ENCODE measurements at regions of chr4 and their contacts with region 1.

Region 1: GRCh38 chr4:158193171-158193749 is 17.0 kb upstream of the TMEM144 start:
- DNase-seq: no peak
- ATAC-seq: peak; percentile 73

Region 2: DNA sequence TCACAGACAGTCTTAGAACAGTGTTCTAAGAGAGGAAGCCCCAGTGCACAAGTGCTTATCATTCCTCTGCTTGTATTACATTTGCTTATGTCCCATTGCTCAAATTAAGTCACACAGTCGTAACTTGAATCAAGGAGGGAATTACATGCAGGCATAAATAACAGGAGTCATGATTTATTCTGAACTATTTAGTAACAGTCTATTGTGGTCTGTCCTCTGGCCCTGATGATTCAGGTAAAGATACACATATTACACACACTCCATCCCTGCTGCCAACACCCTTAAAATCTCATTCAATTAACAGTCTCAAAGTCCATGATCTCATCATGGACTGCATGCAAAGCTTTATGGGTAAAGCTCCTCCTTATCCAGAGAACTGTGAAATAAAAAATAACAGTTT is 912.6 kb before region 1 on chr4:
- intact Hi-C with region 1: no loop called
- DNase-seq: no peak
- ATAC-seq: no peak

Region 3: DNA sequence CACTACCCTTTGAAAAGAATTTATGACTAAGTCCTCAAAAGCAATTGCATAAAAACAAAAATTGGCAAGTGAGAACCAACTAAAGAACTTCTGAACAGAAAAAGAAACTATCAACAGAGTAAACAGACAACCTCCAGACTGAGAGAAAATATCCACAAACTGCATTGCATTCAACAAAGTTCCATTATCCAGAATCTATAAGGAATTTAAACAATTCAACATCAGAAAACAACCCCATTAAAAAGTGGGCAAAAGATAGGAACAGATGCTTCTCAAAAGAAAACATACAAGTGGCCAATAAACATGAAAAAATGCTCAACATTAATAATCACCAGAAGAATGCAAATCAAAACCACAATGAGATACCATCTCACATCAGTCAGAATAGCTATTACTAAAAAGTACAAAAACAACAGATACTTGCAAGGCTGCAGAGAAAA is 150.6 kb before region 1 on chr4:
- intact Hi-C with region 1: no loop called
- DNase-seq: no peak
- ATAC-seq: no peak

Region 4: DNA sequence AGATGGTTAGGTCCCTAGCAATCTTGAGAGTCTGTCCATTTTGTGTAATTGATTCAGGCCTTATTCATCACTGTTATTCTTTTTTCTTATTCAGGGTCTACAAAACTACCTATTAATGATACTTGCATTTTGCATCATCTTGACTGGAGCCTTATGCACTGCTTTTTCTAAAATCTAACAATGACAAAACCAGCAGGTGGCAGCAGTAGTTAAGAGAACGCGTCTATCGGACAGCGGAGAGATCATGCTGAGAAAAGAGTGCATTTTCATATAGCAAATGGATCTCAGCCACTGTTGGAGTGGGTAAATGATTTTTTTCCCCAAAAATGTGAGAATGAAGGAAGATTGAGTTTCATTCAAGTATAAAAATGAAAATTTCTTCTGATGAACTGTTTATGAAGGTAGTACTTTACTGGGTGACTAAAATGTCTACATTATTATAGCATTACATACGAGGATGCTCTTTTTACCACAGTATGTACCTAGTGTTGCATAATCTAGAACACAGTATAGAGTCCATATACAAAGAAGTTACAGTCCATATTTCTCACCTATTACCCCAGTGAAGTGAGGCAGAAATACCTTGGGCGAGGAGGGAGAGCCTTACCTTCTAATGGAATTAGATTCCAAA is 60.2 kb after region 1 on chr4:
- intact Hi-C with region 1: loop called (anchors 10 kb)
- DNase-seq: peak; percentile 69
- ATAC-seq: peak; percentile 78